ENCODE measurements at regions of chr13 and their contacts with region 1.

Region 1: GRCh38 chr13:95480131-95480545 is 72.4 kb upstream of the CLDN10 start:
- DNase-seq: peak; percentile 16
- H3K4me3 ChIP-seq: no peak overlapping the region
- H3K27ac ChIP-seq: no peak overlapping the region
- H3K4me1 ChIP-seq: no peaks in the 10 kb centered on the region
- H3K27me3 ChIP-seq: no peaks in the 10 kb centered on the region
- CTCF ChIP-seq: no peak

Region 2: DNA sequence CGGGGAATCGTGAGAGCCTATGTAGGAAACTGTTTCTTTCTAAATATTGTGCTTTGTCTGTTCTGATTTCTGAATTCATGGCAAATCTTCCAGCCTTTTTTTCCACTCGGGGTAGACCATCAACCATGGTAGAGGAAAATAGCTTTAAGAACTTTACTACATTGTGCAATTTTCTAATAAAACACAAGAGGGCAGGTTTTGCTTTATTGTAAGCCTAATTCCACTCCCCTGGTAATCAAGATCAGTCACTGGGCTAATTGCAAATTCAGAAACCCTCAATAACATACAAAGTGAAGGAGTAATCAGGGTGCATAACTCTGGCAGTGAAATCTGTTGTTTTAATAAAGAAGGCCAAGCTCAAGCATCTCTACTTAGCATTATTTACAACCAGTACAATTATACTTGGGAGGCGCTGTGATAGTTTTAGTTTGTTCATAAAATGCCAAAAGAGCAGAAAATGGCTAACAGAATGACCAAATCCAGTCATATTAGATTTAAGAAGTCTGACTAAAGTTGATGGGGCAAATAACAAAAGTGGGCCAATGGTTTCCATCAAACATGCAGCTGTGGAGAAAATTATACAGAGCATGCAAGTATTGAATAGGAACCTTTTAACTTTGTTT is 1044.4 kb before region 1 on chr13:
- CTCF ChIA-PET with region 1: no interaction called
- POLR2A ChIA-PET with region 1: no interaction called
- intact Hi-C with region 1: loop called (anchors 5 kb)
- DNase-seq: peak; percentile 75
- H3K4me3 ChIP-seq: no peak overlapping the region
- H3K27ac ChIP-seq: no peak overlapping the region
- H3K4me1 ChIP-seq: no peaks in the 10 kb centered on the region
- H3K27me3 ChIP-seq: no peaks in the 10 kb centered on the region
- CTCF ChIP-seq: peak; percentile 68

Region 3: GRCh38 chr13:94674609-94675348 is 805.4 kb before region 1 on chr13:
- CTCF ChIA-PET with region 1: no interaction called
- POLR2A ChIA-PET with region 1: no interaction called
- intact Hi-C with region 1: loop called (anchors 10 kb)
- DNase-seq: peak; percentile 67
- H3K4me3 ChIP-seq: no peak overlapping the region
- H3K27ac ChIP-seq: no peak overlapping the region
- H3K4me1 ChIP-seq: no peaks in the 10 kb centered on the region
- H3K27me3 ChIP-seq: peaks cover 9% of the 10 kb centered on the region
- CTCF ChIP-seq: peak; percentile 84

Region 4: DNA sequence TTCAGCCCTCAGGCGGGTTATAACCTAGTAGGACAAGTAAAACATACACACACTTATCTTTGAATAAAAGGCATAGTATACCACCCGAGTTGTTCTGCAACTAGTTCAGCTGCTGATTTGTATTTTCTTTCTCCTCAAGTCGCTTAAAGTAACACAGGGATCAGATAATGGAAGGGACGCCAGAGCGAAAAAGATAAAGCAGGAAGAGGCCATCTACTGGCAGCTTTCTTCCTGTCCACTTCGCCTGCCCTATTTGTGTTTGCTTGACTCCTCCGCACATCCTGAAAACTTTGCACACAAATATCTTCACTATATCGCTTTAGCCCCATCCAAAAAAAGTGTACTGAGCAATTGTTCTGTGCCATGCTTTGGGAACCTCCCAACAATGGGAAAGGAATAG is 529.8 kb before region 1 on chr13:
- CTCF ChIA-PET with region 1: no interaction called
- POLR2A ChIA-PET with region 1: no interaction called
- intact Hi-C with region 1: no loop called
- DNase-seq: no peak
- H3K4me3 ChIP-seq: no peak overlapping the region
- H3K27ac ChIP-seq: no peak overlapping the region
- H3K4me1 ChIP-seq: no peaks in the 10 kb centered on the region
- H3K27me3 ChIP-seq: peaks cover 5% of the 10 kb centered on the region
- CTCF ChIP-seq: peak; percentile 37; the same call in 1 of the 2 replicates

Region 5: DNA sequence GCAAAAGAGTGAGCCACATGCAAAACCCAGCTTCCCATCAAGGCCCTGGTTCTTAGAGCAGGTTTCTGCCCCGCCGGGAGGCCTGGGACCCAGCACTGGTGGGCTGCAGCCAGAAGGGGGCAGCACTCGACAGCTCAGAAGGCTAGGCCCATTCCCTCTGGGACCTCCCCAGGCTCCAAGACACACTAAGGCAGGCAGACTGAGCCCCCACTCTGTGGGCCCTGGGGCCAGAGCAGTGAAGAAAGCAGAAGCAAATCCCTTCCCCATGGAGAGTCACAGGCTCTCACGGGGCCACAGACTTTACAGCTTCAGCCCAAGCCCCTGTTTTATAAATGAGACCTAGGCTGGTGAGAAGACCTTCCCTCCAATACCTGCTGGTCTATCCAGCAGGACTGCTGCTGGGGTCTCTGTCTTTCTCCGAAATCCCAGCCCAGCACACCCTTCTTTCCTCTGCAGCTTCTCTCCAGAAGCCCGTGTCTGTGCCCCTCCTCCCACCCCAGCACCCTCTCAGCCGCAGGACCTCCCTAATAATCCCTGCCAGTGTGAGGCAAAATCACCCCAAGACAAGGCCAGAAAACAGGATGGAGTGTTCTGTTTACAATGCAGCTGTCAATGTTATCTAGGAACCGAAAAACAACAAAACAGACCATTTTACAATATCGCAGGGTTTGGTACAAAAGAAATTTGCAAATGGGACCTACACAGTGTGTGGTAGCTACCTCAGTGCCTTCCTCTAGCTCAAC is 288.1 kb before region 1 on chr13:
- CTCF ChIA-PET with region 1: interaction called, 3 read pairs
- POLR2A ChIA-PET with region 1: no interaction called
- intact Hi-C with region 1: loop called (anchors 2 kb)
- DNase-seq: peak; percentile 91
- H3K4me3 ChIP-seq: no peak overlapping the region
- H3K27ac ChIP-seq: peak overlapping the region; percentile 60
- H3K4me1 ChIP-seq: peaks cover 29% of the 10 kb centered on the region
- H3K27me3 ChIP-seq: no peaks in the 10 kb centered on the region
- CTCF ChIP-seq: peak; percentile 96

Region 6: DNA sequence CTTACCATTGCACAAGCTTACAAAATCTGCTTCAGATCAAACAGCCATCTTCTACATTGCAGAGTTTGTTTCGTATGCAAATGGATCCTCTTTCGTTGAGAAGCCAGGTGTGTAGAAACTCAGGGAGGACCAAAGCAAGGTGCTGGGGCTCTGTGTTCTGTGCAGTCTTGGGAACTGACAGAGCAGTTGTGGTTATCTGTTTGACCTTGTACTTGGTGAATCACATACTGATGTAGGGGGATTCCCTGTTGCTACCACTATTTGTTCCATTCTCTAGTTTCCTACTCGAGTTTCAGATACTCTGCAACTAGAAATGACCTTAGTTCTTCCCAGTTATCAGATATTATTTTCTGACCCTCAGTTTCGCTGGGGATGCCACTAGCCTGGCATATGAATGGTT is 22.8 kb before region 1 on chr13:
- CTCF ChIA-PET with region 1: no interaction called
- POLR2A ChIA-PET with region 1: no interaction called
- intact Hi-C with region 1: no loop called
- DNase-seq: no peak
- H3K4me3 ChIP-seq: no peak overlapping the region
- H3K27ac ChIP-seq: no peak overlapping the region
- H3K4me1 ChIP-seq: peaks cover 3% of the 10 kb centered on the region
- H3K27me3 ChIP-seq: no peaks in the 10 kb centered on the region
- CTCF ChIP-seq: no peak